CD8-positive, alpha-beta memory T cell (primary cell): ENCODE measurements at regions of chr7 and their contacts with region 1.

Region 1: GRCh38 chr7:106153891-106154449 is 41.9 kb upstream of the SYPL1 start:
- DNase-seq: peak; percentile 49 to 81 (median 60)
- H3K4me3 ChIP-seq: no peak overlapping the region
- H3K4me3 Mint-ChIP-seq: no peak overlapping the region
- H3K27ac ChIP-seq: no peak overlapping the region
- H3K27ac Mint-ChIP-seq: no peak overlapping the region
- H3K4me1 ChIP-seq: no peaks in the 10 kb centered on the region
- H3K4me1 Mint-ChIP-seq: peaks cover 0 to 3% (median 2%) of the 10 kb centered on the region in 3 donors
- H3K27me3 ChIP-seq: no peaks in the 10 kb centered on the region
- H3K27me3 Mint-ChIP-seq: peaks cover 8 to 29% of the 10 kb centered on the region in 2 donors

Region 2: GRCh38 chr7:106047818-106048705 is 105.9 kb before region 1 on chr7:
- CTCF ChIA-PET with region 1: interaction called, 14 read pairs
- POLR2A ChIA-PET with region 1: no interaction called
- DNase-seq: no peak
- H3K4me3 ChIP-seq: no peak overlapping the region
- H3K4me3 Mint-ChIP-seq: no peak overlapping the region
- H3K27ac ChIP-seq: no peak overlapping the region
- H3K27ac Mint-ChIP-seq: no peak overlapping the region
- H3K4me1 ChIP-seq: peaks cover under 1% of the 10 kb centered on the region
- H3K4me1 Mint-ChIP-seq: no peaks in the 10 kb centered on the region
- H3K27me3 ChIP-seq: no peaks in the 10 kb centered on the region
- H3K27me3 Mint-ChIP-seq: peaks cover 4 to 8% of the 10 kb centered on the region in 2 donors

Region 3: GRCh38 chr7:106071356-106071998 is 82.5 kb before region 1 on chr7:
- CTCF ChIA-PET with region 1: interaction called, 20 read pairs
- POLR2A ChIA-PET with region 1: no interaction called
- DNase-seq: peak in 3 of 5 donors; percentile 7 to 73 (median 61)
- H3K4me3 ChIP-seq: peak overlapping the region; percentile 53
- H3K4me3 Mint-ChIP-seq: peak overlapping the region; percentile 35 to 83 (median 81)
- H3K27ac ChIP-seq: peak overlapping the region; percentile 52
- H3K27ac Mint-ChIP-seq: peak overlapping the region; percentile 83 to 97 (median 90)
- H3K4me1 ChIP-seq: peaks cover 38% of the 10 kb centered on the region
- H3K4me1 Mint-ChIP-seq: peaks cover 38 to 46% (median 38%) of the 10 kb centered on the region in 3 donors
- H3K27me3 ChIP-seq: no peaks in the 10 kb centered on the region
- H3K27me3 Mint-ChIP-seq: no peaks in the 10 kb centered on the region

Region 4: DNA sequence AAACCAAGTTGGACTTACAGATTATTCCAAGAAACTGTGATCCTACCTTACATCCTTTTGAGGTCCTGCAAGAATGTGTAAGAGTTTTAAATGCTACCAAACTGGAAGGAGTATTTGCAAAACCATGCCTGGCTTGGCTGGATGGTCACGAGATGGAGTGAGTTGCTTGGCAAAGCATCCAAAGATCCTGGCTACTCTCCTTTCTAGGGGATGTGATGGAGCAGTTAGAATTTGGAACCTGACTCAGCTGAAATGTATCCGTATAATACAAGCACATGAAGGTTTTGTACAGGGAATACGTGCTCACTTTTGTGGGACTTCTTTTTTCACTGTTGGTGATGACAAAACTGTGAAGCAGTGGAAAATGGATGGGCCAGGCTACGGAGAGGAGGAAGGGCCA is 28.6 kb before region 1 on chr7:
- CTCF ChIA-PET with region 1: no interaction called
- POLR2A ChIA-PET with region 1: no interaction called
- DNase-seq: no peak
- H3K4me3 ChIP-seq: no peak overlapping the region
- H3K4me3 Mint-ChIP-seq: peak overlapping the region in 1 of 7 donors; percentile 45
- H3K27ac ChIP-seq: no peak overlapping the region
- H3K27ac Mint-ChIP-seq: no peak overlapping the region
- H3K4me1 ChIP-seq: no peaks in the 10 kb centered on the region
- H3K4me1 Mint-ChIP-seq: peaks cover 7 to 8% (median 7%) of the 10 kb centered on the region in 3 donors
- H3K27me3 ChIP-seq: no peaks in the 10 kb centered on the region
- H3K27me3 Mint-ChIP-seq: peaks cover 1 to 16% of the 10 kb centered on the region in 2 donors

Region 5: DNA sequence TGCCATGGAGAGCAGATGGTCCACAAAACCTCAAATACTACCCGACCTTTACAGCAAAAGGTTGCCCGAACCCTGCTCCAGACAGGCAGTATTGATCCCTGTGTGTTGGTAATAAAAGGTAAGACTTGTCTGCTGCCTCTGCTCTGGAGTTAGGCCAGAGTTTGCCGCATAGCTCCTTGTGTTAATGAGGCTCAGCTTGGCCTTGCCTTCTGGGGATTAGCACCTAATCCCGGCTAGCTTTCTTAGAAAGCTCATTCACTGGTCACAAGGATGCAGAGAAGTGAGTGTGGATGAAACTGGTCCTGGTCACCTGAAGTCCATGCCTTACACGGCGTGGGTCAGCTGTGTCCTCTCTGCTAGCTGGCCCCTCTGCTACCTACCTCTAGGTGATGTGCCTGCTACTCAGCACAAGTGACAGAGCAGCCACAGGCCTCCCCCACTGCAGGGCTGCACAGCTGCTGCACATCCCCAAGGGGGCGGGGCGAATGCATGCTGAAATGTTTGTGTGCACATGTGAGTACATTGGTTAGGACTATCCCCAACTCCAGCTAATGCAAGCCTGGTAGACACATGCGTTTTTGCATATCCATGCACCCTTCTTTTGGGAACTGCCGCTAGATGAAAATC is 10.1 kb before region 1 on chr7:
- CTCF ChIA-PET with region 1: interaction called, 15 read pairs
- POLR2A ChIA-PET with region 1: no interaction called
- DNase-seq: no peak
- H3K4me3 ChIP-seq: no peak overlapping the region
- H3K4me3 Mint-ChIP-seq: no peak overlapping the region
- H3K27ac ChIP-seq: no peak overlapping the region
- H3K27ac Mint-ChIP-seq: no peak overlapping the region
- H3K4me1 ChIP-seq: no peaks in the 10 kb centered on the region
- H3K4me1 Mint-ChIP-seq: no peaks in the 10 kb centered on the region
- H3K27me3 ChIP-seq: no peaks in the 10 kb centered on the region
- H3K27me3 Mint-ChIP-seq: peaks cover 0 to 3% of the 10 kb centered on the region in 2 donors